CD8-positive, alpha-beta T cell (primary cell): ENCODE measurements at regions of chr16 and their contacts with region 1.

Region 1: GRCh38 chr16:88686439-88687253 is at the start of gene SNAI3:
- DNase-seq: peak; percentile 58 to 89 (median 85)
- ATAC-seq: peak; percentile 77
- H3K4me3 ChIP-seq: peak within 1 kb of the TSS; percentile 87 to 93
- H3K4me3 Mint-ChIP-seq: peak within 1 kb of the TSS; percentile 80
- H3K27ac ChIP-seq: peak within 1 kb of the TSS; percentile 59 to 63
- H3K27ac Mint-ChIP-seq: peak within 1 kb of the TSS; percentile 69
- H3K4me1 ChIP-seq: peaks cover 46% of the 10 kb centered on the region
- H3K4me1 Mint-ChIP-seq: peaks cover 50% of the 10 kb centered on the region
- H3K27me3 ChIP-seq: no peaks in the 10 kb centered on the region
- H3K27me3 Mint-ChIP-seq: no peaks in the 10 kb centered on the region
- CTCF ChIP-seq: no peak
- total RNA-seq, gene SNAI3: 3.1 to 3.4 TPM

Region 2: GRCh38 chr16:87950765-87951549 is 735.7 kb before region 1 on chr16 and contains the start of gene BANP:
- CTCF ChIA-PET with region 1: no interaction called
- POLR2A ChIA-PET with region 1: no interaction called
- intact Hi-C with region 1: loop called in 1 of 2 experiments (anchors 10 kb)
- DNase-seq: peak; percentile 92 to 100 (median 96)
- ATAC-seq: peak; percentile 93
- H3K4me3 ChIP-seq: peak within 1 kb of the TSS; percentile 72 to 98
- H3K4me3 Mint-ChIP-seq: peak within 1 kb of the TSS; percentile 97
- H3K27ac ChIP-seq: peak within 1 kb of the TSS; percentile 88 to 96
- H3K27ac Mint-ChIP-seq: peak within 1 kb of the TSS; percentile 99
- H3K4me1 ChIP-seq: peaks cover 37% of the 10 kb centered on the region
- H3K4me1 Mint-ChIP-seq: peaks cover 42% of the 10 kb centered on the region
- H3K27me3 ChIP-seq: no peaks in the 10 kb centered on the region
- H3K27me3 Mint-ChIP-seq: no peaks in the 10 kb centered on the region
- CTCF ChIP-seq: peak; percentile 41
- total RNA-seq, gene BANP: 55.3 to 60.6 TPM

Region 3: DNA sequence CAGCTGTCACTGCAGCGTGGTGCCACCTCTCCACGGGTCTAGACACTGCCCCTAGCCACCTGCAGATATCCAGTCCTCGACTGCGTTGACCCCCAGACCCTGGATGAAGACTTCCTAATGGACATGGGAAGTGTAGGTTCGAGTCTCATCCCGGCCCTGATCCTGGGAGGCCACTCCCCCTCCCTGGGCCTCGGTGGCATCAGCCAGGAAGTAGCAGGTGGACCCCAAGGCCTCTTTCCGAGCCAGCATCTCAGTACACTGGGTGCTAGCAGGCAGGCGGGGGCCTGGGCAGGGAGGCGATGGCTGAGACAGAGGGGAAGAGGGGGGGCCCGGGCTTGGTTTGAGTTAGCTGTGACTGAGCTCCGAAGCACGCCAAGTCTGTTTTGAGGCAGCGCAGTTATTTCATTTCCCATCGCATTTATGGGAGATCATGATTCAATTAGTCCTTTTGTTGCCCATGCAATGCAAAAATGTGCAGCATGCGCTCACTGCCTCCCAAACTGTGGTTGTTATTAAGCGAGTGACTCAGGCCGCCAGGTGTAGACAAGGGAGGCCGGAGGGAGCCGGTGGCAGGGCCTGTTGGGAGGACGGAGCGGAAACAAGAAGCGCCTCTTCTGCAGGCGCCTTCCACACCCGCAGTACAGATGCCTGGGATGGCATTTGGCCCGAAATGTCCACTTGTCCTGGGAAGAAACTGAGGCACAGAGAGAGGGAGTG is 329.2 kb before region 1 on chr16:
- CTCF ChIA-PET with region 1: no interaction called
- POLR2A ChIA-PET with region 1: no interaction called
- intact Hi-C with region 1: no loop called
- DNase-seq: no peak
- ATAC-seq: no peak
- H3K4me3 ChIP-seq: no peak overlapping the region
- H3K4me3 Mint-ChIP-seq: no peak overlapping the region
- H3K27ac ChIP-seq: no peak overlapping the region
- H3K27ac Mint-ChIP-seq: no peak overlapping the region
- H3K4me1 ChIP-seq: no peaks in the 10 kb centered on the region
- H3K4me1 Mint-ChIP-seq: no peaks in the 10 kb centered on the region
- H3K27me3 ChIP-seq: no peaks in the 10 kb centered on the region
- H3K27me3 Mint-ChIP-seq: peaks cover 7% of the 10 kb centered on the region
- CTCF ChIP-seq: no peak

Region 4: DNA sequence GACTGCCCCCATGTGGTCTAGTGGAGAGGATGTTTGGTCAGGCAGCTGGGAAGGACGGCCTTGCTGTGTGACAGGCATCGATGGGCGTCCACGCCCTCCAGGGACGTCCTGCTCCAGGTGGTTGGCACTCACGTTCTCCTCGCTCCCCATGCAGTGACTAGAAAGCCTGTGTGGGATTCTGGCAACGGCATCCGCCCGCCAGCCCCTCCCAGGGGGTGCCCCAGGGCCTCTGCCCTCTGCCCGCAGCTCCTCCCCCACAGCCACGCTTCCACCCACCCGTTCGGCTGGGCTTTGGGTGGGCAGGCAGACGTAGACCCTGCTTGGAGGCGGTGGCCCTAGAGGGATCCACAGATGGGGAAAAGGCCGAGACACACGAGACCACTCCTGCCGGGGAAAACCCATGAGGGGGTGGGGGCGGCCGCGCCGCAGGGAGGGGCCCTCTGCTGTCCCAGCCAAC is 52.9 kb before region 1 on chr16:
- CTCF ChIA-PET with region 1: interaction called, 3 read pairs
- POLR2A ChIA-PET with region 1: interaction called, 5 read pairs
- intact Hi-C with region 1: loop called in 1 of 2 experiments (anchors 2 kb)
- DNase-seq: peak in 8 of 9 experiments; percentile 40 to 91 (median 72)
- ATAC-seq: peak; percentile 54
- H3K4me3 ChIP-seq: peak overlapping the region; percentile 61 to 67
- H3K4me3 Mint-ChIP-seq: peak overlapping the region; percentile 80
- H3K27ac ChIP-seq: peak overlapping the region; percentile 50 to 78
- H3K27ac Mint-ChIP-seq: peak overlapping the region; percentile 87
- H3K4me1 ChIP-seq: peaks cover 42% of the 10 kb centered on the region
- H3K4me1 Mint-ChIP-seq: peaks cover 31% of the 10 kb centered on the region
- H3K27me3 ChIP-seq: peaks cover 0 to 8% of the 10 kb centered on the region in 2 experiments
- H3K27me3 Mint-ChIP-seq: peaks cover 5% of the 10 kb centered on the region
- CTCF ChIP-seq: no peak

Region 5: GRCh38 chr16:88662843-88663606 is 23.6 kb before region 1 on chr16 and contains the start of gene MVD:
- CTCF ChIA-PET with region 1: interaction called, 5 read pairs
- POLR2A ChIA-PET with region 1: interaction called, 3 read pairs
- intact Hi-C with region 1: loop called (anchors 1 to 2 kb)
- DNase-seq: peak; percentile 88 to 99 (median 95)
- ATAC-seq: peak; percentile 96
- H3K4me3 ChIP-seq: peak within 1 kb of the TSS; percentile 81 to 85
- H3K4me3 Mint-ChIP-seq: peak within 1 kb of the TSS; percentile 94
- H3K27ac ChIP-seq: peak within 1 kb of the TSS; percentile 84 to 87
- H3K27ac Mint-ChIP-seq: peak within 1 kb of the TSS; percentile 95
- H3K4me1 ChIP-seq: peaks cover 15% of the 10 kb centered on the region
- H3K4me1 Mint-ChIP-seq: peaks cover 20% of the 10 kb centered on the region
- H3K27me3 ChIP-seq: no peaks in the 10 kb centered on the region
- H3K27me3 Mint-ChIP-seq: no peaks in the 10 kb centered on the region
- CTCF ChIP-seq: no peak
- total RNA-seq, gene MVD: 118 to 124 TPM

Region 6: GRCh38 chr16:88706288-88706964 is 19.8 kb after region 1 on chr16 and contains the starts of genes CTU2 and RNF166:
- CTCF ChIA-PET with region 1: interaction called, 54 read pairs
- POLR2A ChIA-PET with region 1: interaction called, 15 read pairs
- intact Hi-C with region 1: loop called (anchors 1 kb)
- DNase-seq: peak; percentile 79 to 97 (median 91)
- ATAC-seq: peak; percentile 55
- H3K4me3 ChIP-seq: peak within 1 kb of the TSS; percentile 80 to 89
- H3K4me3 Mint-ChIP-seq: peak within 1 kb of the TSS; percentile 90
- H3K27ac ChIP-seq: peak within 1 kb of the TSS; percentile 88 to 91
- H3K27ac Mint-ChIP-seq: peak within 1 kb of the TSS; percentile 98
- H3K4me1 ChIP-seq: peaks cover 30% of the 10 kb centered on the region
- H3K4me1 Mint-ChIP-seq: peaks cover 44% of the 10 kb centered on the region
- H3K27me3 ChIP-seq: no peaks in the 10 kb centered on the region
- H3K27me3 Mint-ChIP-seq: no peaks in the 10 kb centered on the region
- CTCF ChIP-seq: no peak
- total RNA-seq, gene CTU2: 59.5 to 60.4 TPM
- total RNA-seq, gene RNF166: 371 to 406 TPM